Activated B cell treated with CpG ODN at 0.5 μM for 24 hours (primary cell): ENCODE measurements at regions of chr19 and their contacts with region 1.

Region 1: GRCh38 chr19:21396893-21397572 is at the start of gene ZNF493:
- DNase-seq: peak; percentile 75
- ATAC-seq: peak; percentile 100
- H3K4me3 Mint-ChIP-seq: peak within 1 kb of the TSS; percentile 99
- H3K27ac Mint-ChIP-seq: peak within 1 kb of the TSS; percentile 91
- H3K4me1 Mint-ChIP-seq: peaks cover 29% of the 10 kb centered on the region
- H3K27me3 Mint-ChIP-seq: no peaks in the 10 kb centered on the region
- CTCF ChIP-seq: no peak
- total RNA-seq, gene ZNF493: 45.0 and 52.7 TPM in 2 replicates

Region 2: DNA sequence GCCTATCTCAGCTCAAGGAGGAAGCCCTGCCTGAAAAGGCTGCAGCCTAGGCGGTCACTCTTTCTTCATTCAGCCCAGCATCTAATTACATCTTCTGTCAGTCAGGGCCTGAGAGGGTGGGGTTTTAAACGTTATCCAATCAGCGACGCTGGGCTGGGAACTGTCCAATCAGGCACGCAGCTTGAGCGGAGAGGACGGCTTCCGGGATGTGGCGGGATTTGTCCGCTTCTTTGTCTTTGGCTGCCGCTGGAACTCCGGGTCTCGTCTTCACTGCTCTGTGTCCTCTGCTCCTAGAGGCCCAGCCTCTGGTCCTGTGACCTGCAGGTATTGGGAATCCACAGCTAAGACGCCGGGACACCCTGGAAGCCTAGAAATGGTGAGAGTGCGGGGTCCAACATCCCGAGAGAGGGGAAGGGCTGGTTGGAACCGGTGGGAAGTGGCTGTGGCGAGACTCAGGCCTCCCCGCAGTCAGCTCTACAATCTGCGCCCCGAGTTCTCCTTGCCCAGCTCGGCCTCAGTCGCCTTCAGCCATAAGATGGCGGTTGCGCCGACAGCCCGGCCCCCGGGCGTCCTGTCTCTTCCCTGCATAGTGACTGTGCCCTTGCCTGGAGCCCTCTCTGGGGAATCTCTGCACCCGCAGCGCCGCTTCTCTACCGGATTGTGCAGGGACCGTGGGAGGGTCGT is 38.1 kb before region 1 on chr19 and contains the start of gene ZNF738:
- CTCF ChIA-PET with region 1: no interaction called
- POLR2A ChIA-PET with region 1: interaction called, 20 read pairs
- intact Hi-C with region 1: loop called (anchors 1 kb)
- DNase-seq: peak; percentile 70
- ATAC-seq: peak; percentile 96
- H3K4me3 Mint-ChIP-seq: peak within 1 kb of the TSS; percentile 100
- H3K27ac Mint-ChIP-seq: peak within 1 kb of the TSS; percentile 96
- H3K4me1 Mint-ChIP-seq: peaks cover 13% of the 10 kb centered on the region
- H3K27me3 Mint-ChIP-seq: no peaks in the 10 kb centered on the region
- CTCF ChIP-seq: no peak
- total RNA-seq, gene ZNF738: 18.7 and 22.2 TPM in 2 replicates

Region 3: GRCh38 chr19:21482863-21483276 is 85.8 kb after region 1 on chr19:
- CTCF ChIA-PET with region 1: no interaction called
- POLR2A ChIA-PET with region 1: interaction called, 13 read pairs
- intact Hi-C with region 1: no loop called
- DNase-seq: peak; percentile 41
- ATAC-seq: peak; percentile 82
- H3K4me3 Mint-ChIP-seq: no peak overlapping the region
- H3K27ac Mint-ChIP-seq: no peak overlapping the region
- H3K4me1 Mint-ChIP-seq: no peaks in the 10 kb centered on the region
- H3K27me3 Mint-ChIP-seq: no peaks in the 10 kb centered on the region
- CTCF ChIP-seq: peak; percentile 37

Region 4: GRCh38 chr19:21513651-21514050 is 116.6 kb after region 1 on chr19:
- CTCF ChIA-PET with region 1: no interaction called
- POLR2A ChIA-PET with region 1: no interaction called
- intact Hi-C with region 1: no loop called
- DNase-seq: no peak
- ATAC-seq: no peak
- H3K4me3 Mint-ChIP-seq: no peak overlapping the region
- H3K27ac Mint-ChIP-seq: peak overlapping the region; percentile 15
- H3K4me1 Mint-ChIP-seq: peaks cover 9% of the 10 kb centered on the region
- H3K27me3 Mint-ChIP-seq: no peaks in the 10 kb centered on the region
- CTCF ChIP-seq: no peak

Region 5: DNA sequence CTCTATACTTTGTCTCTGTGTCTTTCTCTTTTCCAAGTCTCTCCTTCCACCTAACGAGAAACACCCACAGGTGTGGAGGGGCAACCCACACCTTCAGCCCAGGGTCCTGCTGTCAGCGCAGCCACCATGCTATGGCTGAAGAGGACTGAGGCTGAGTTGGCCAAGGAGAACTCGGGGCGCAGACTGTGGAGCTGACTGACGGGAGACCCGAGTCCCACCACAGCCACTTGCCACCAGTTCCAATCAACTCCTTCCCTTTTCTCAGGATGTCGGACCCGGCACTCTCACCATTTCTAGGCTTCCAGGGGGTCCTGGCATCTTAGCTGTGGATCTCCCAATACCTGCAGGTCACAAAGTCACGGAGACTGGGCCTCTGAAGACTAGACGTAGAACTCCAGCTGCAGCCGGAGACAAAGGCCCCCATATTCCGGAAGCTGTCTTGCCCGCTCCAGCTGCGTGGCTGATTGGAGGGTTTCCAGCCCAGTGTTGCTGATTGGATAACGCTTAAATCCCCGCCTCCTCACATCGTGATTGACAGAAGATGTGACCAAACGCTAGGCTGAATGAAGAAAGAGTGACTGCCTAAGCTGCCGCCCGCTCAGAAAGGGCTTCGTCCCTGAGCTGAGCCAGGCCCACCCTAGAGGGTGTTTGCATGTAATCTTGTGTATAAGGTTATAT is 171.9 kb after region 1 on chr19:
- CTCF ChIA-PET with region 1: no interaction called
- POLR2A ChIA-PET with region 1: no interaction called
- intact Hi-C with region 1: loop called (anchors 2 kb)
- DNase-seq: peak; percentile 58
- ATAC-seq: peak; percentile 94
- H3K4me3 Mint-ChIP-seq: peak overlapping the region; percentile 99
- H3K27ac Mint-ChIP-seq: peak overlapping the region; percentile 96
- H3K4me1 Mint-ChIP-seq: peaks cover 19% of the 10 kb centered on the region
- H3K27me3 Mint-ChIP-seq: no peaks in the 10 kb centered on the region
- CTCF ChIP-seq: no peak

Region 6: DNA sequence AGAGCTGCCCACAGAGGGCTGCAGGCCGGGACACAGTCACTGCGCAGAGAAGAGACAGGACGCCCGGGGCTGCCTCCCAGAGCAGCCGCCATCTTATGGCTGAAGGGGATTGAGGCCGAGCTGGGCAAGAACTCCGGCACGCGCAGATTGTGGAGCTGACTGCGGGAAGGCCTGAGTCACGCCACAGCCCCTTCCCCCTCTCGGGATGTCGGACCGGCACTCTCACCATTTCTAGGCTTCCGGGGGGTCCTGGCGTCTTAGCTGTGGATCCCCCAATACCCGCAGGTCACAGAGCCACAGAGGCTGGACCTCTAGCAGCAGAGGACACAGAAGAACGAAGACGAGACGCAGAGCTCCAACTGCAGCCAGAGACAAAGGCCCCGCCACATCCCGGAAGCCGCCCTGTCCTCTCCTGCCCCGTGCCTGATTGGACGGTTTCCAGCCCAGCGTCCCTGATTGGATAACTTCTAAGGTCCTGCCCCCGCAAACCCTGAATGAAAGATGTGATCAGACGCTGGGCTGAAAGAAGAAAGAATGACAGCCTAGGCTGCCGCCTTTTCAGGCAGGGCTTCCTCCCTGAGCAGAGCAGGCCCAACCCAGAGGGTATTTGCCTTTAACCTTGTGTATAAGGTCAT is 438.9 kb after region 1 on chr19 and contains the start of gene ZNF43:
- CTCF ChIA-PET with region 1: no interaction called
- POLR2A ChIA-PET with region 1: interaction called, 8 read pairs
- intact Hi-C with region 1: loop called (anchors 1 kb)
- DNase-seq: peak; percentile 77
- ATAC-seq: peak; percentile 98
- H3K4me3 Mint-ChIP-seq: peak within 1 kb of the TSS; percentile 100
- H3K27ac Mint-ChIP-seq: peak within 1 kb of the TSS; percentile 100
- H3K4me1 Mint-ChIP-seq: peaks cover 38% of the 10 kb centered on the region
- H3K27me3 Mint-ChIP-seq: no peaks in the 10 kb centered on the region
- CTCF ChIP-seq: no peak
- total RNA-seq, gene ZNF43: 41.8 and 52.4 TPM in 2 replicates